ENCODE measurements at regions of chr15 and their contacts with region 1.

Region 1: GRCh38 chr15:99282121-99282520 is 30.8 kb downstream of the LRRC28 start:
- DNase-seq: no peak
- ATAC-seq: no peak
- H3K4me3 ChIP-seq: no peak overlapping the region
- H3K27ac ChIP-seq: no peak overlapping the region
- H3K4me1 ChIP-seq: peaks cover 0 to 12% of the 10 kb centered on the region in 2 donors
- H3K27me3 ChIP-seq: no peaks in the 10 kb centered on the region
- CTCF ChIP-seq: no peak

Region 2: GRCh38 chr15:99729920-99730319 is 447.8 kb after region 1 on chr15:
- intact Hi-C with region 1: loop called in 1 of 2 experiments (anchors 10 kb)
- DNase-seq: peak in 2 of 4 donors; percentile 62 to 71
- ATAC-seq: no peak
- H3K4me3 ChIP-seq: no peak overlapping the region
- H3K27ac ChIP-seq: no peak overlapping the region
- H3K4me1 ChIP-seq: peaks cover 0 to 15% of the 10 kb centered on the region in 2 donors
- H3K27me3 ChIP-seq: no peaks in the 10 kb centered on the region
- CTCF ChIP-seq: no peak

Region 3: GRCh38 chr15:99755692-99756409 is 473.7 kb after region 1 on chr15:
- intact Hi-C with region 1: loop called in 1 of 2 experiments (anchors 10 kb)
- DNase-seq: peak in 2 of 4 donors; percentile 61 to 76
- ATAC-seq: peak; percentile 99
- H3K4me3 ChIP-seq: no peak overlapping the region
- H3K27ac ChIP-seq: no peak overlapping the region
- H3K4me1 ChIP-seq: no peaks in the 10 kb centered on the region
- H3K27me3 ChIP-seq: no peaks in the 10 kb centered on the region
- CTCF ChIP-seq: peak; percentile 67 to 78

Measured in left lung (tissue), 14 donors.